Motor neuron (in vitro differentiated cells): ENCODE measurements at regions of chr11 and their contacts with region 1.

Region 1: DNA sequence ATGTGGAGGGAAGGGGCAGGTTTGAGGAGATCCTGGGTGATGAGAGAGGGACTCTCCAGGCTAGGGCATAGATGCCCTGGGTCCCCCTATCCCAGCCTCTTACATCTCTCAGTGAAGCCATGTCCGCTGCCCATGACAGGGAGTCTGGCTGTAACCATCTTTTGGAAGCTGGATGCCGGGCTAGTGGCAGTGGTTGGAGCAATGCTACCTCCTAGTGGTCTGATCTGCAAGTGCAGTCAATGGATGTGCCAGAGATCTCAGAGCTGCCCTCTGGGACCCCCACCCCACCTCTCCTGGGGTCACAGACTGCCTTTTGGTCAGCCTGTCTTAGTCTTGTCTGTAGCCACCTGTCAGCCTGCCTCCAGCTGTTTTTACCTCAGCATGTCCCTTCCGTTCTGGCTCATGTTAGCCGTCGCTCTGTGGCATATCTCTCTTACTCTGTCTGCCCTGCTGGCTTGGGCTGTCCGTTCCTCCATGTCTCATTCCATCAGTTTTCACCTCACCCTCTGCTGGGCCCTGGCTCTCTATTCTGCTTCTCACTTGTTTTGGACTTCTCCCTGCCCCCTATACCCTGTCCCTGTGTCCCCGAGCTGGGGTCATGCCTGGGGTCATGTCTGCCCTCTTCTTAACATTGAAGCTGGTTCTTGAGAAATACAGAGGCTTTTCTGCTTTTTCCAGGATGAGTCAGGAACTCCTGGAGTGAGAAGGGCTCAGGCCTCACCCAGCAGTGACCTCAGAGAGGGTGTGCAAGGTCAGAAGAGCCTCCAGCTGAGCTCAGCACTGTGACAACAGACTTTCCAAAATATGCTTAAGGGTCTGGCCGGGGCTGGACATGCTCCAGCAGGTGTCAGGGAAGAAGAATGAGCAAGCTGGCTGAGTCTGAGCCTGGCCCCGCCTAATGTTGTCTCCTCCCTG is 52.0 kb upstream of the THY1 start:
- ATAC-seq: peak; percentile 32 to 79 (median 68)
- H3K4me3 ChIP-seq: no peak overlapping the region
- H3K27ac ChIP-seq: no peak overlapping the region
- H3K4me1 ChIP-seq: no peaks in the 10 kb centered on the region

Region 2: GRCh38 chr11:119356349-119357031 is 118.4 kb before region 1 on chr11:
- in situ Hi-C with region 1: loop called in 2 of 9 experiments (anchors 10 kb)
- ATAC-seq: peak; percentile 55 to 81 (median 71)
- H3K4me3 ChIP-seq: peak overlapping the region; percentile 15 to 26 (median 25)
- H3K27ac ChIP-seq: no peak overlapping the region
- H3K4me1 ChIP-seq: peaks cover 21 to 47% of the 10 kb centered on the region in 2 donors

Region 3: DNA sequence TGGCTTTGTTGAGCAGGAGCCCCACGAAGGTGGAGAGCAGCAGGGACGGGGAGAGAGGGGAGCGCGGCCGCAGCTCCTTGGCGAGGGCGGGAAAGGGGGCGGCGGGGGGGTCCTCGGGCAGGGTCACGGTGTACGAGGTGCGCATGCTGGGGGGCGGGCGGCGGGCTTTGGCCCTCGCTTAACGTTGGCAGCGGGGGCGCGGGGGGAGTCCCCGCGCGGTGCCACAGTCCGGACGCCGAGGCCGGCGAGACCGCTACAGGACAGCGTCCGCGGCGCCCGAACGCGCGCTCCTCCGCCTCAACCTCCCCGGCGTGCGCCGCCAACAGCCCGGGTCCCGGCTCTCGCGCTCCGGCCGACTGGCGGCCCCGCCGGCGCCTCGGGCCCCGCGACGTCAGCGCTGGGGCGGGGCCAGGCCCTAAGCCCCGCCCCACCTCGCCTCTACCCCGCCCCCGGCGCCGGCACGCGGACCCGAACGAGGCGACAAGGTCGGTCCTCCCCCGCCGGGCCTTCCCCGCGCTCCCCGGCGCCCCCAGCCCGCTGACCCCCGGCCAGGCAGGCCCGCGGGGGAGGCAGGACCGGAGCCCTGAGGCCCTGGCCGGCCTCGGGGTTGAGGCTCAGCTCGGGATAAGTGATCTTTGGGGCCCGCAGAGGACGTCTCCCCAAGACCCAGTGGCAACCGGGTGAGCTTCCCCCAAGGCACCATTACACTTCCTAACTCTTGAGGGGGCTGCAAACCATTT is 110.9 kb before region 1 on chr11:
- in situ Hi-C with region 1: loop called in 2 of 9 experiments (anchors 10 kb)
- ATAC-seq: peak in 7 of 8 experiments; percentile 1 to 57 (median 36)
- H3K4me3 ChIP-seq: peak overlapping the region; percentile 34 to 48 (median 42)
- H3K27ac ChIP-seq: no peak overlapping the region
- H3K4me1 ChIP-seq: peaks cover 52 to 64% of the 10 kb centered on the region in 2 donors

Region 4: DNA sequence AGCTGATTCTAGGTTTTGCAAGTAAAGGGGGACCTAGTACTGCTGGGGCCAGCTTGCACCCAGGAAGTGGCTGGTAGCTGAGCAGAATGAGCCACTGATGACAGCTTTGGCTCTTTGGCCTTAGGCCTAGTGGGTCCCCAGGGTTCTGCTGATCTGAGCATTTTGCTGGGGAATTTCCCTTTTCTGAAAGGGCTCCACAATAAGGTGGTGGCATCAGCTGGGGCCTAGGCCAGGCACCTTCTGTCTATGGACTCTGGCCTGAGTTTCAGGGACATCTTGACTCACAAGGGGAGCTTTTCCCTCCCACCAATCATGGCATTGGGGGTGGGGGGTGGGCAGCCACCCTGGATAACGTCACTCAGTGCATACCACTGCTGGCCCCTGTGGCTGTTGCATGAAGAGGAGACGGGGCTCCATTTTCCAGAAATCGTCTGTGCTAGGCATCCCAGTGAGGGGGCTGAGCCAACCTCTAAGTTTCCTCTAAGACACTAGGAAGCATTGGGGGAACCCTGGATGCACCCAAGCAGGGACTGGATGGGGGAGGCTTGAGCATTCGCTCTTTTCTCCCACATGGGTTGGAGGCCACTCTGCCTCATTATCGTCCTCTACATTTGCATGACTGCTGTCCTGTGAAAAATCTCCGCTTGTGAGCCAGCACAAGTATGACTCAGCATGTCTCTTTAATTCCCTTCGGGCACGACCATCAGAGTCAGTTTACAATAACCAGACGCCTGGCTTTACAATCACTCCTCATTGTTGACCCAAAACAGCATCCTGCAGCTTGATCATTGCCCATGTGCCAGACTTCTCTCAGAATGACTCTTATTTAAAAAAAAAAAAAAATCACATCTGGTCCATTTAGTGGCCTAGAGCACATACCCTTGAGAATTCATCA is 93.0 kb after region 1 on chr11:
- in situ Hi-C with region 1: no loop called
- ATAC-seq: peak; percentile 72 to 97 (median 94)
- H3K4me3 ChIP-seq: no peak overlapping the region
- H3K27ac ChIP-seq: peak overlapping the region; percentile 46 to 77
- H3K4me1 ChIP-seq: peaks cover 14 to 15% of the 10 kb centered on the region in 2 donors